ENCODE measurements at regions of chr7 and their contacts with region 1.

Region 1: GRCh38 chr7:120725376-120726039 is 132.4 kb downstream of the TSPAN12 start:
- DNase-seq: peak in 1 of 2 experiments; percentile 16
- H3K4me3 ChIP-seq: no peak overlapping the region
- H3K4me3 Mint-ChIP-seq: no peak overlapping the region
- H3K27ac Mint-ChIP-seq: no peak overlapping the region
- H3K4me1 ChIP-seq: no peaks in the 10 kb centered on the region
- H3K4me1 Mint-ChIP-seq: no peaks in the 10 kb centered on the region
- H3K27me3 ChIP-seq: no peaks in the 10 kb centered on the region
- H3K27me3 Mint-ChIP-seq: peaks cover 3% of the 10 kb centered on the region
- CTCF ChIP-seq: peak; percentile 54 to 67

Region 2: GRCh38 chr7:120588416-120588815 is 137.1 kb before region 1 on chr7:
- CTCF ChIA-PET with region 1: no interaction called
- POLR2A ChIA-PET with region 1: no interaction called
- intact Hi-C with region 1: loop called (anchors 10 kb)
- DNase-seq: no peak
- H3K4me3 ChIP-seq: no peak overlapping the region
- H3K4me3 Mint-ChIP-seq: no peak overlapping the region
- H3K27ac Mint-ChIP-seq: no peak overlapping the region
- H3K4me1 ChIP-seq: no peaks in the 10 kb centered on the region
- H3K4me1 Mint-ChIP-seq: no peaks in the 10 kb centered on the region
- H3K27me3 ChIP-seq: no peaks in the 10 kb centered on the region
- H3K27me3 Mint-ChIP-seq: peaks cover 3% of the 10 kb centered on the region
- CTCF ChIP-seq: no peak

Region 3: GRCh38 chr7:120813546-120814252 is 88.2 kb after region 1 on chr7:
- CTCF ChIA-PET with region 1: no interaction called
- POLR2A ChIA-PET with region 1: no interaction called
- intact Hi-C with region 1: no loop called
- DNase-seq: no peak
- H3K4me3 ChIP-seq: no peak overlapping the region
- H3K4me3 Mint-ChIP-seq: no peak overlapping the region
- H3K27ac Mint-ChIP-seq: no peak overlapping the region
- H3K4me1 ChIP-seq: no peaks in the 10 kb centered on the region
- H3K4me1 Mint-ChIP-seq: no peaks in the 10 kb centered on the region
- H3K27me3 ChIP-seq: no peaks in the 10 kb centered on the region
- H3K27me3 Mint-ChIP-seq: peaks cover 3% of the 10 kb centered on the region
- CTCF ChIP-seq: no peak

Region 4: DNA sequence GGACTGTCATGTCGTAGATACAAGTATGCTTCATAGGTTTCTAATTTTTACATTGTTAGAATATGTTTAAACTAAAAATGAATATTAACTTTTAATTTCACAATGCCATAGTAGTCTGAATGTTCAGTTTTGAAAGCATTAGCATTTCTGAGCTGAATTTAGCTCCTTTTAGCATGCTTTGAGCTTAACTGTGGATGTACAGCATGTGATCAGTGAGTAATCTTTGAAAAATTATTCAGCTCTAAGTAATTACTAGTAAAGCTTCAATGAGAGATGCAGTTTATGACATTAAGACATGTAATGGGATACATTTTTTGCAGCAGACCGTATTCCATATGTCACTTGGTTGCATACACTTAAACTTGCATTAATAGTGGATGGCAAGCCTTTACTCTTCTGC is 489.1 kb after region 1 on chr7:
- CTCF ChIA-PET with region 1: no interaction called
- POLR2A ChIA-PET with region 1: no interaction called
- intact Hi-C with region 1: no loop called
- DNase-seq: no peak
- H3K4me3 ChIP-seq: no peak overlapping the region
- H3K4me3 Mint-ChIP-seq: no peak overlapping the region
- H3K27ac Mint-ChIP-seq: no peak overlapping the region
- H3K4me1 ChIP-seq: no peaks in the 10 kb centered on the region
- H3K4me1 Mint-ChIP-seq: no peaks in the 10 kb centered on the region
- H3K27me3 ChIP-seq: no peaks in the 10 kb centered on the region
- H3K27me3 Mint-ChIP-seq: no peaks in the 10 kb centered on the region
- CTCF ChIP-seq: no peak